HepG2 (cell line): ENCODE measurements at regions of chr12 and their contacts with region 1.

Region 1: DNA sequence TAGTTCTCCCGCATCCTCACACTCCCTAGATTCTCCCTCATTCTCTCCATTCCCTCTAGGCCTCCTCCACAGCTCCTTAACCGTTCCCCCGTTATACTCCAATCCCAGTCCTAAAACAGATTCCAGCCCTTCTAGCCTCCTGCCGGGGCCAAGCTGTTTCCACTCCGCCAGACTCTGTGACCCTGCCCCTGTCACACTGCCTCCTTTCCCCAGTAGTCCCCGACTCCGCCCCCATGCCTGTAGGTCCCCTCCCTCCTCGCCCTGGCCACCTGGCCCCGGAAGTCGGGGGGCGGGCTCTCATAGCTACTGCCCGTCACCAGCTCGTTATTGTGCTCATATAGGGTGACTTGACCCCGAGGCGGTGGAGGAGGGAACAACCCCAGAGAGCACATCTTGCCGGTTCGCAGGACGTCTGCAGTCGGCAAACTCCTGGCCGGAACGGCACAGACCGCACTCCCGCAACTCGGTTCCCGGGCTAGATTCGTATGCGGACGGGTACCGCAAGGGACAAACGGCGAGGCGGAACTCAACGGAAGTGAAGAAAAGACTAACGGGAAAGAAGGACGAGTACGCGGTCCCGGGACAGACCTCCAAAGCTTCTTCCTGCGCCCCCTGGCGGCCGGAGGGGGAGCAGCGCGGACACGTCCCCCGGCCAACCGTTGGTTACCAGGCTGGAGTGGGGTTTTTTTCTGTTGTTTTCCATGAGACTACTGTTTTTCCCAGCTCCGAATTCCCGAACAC is at the start of gene AAAS:
- DNase-seq: peak; percentile 93
- ATAC-seq: peak; percentile 89
- H3K4me3 ChIP-seq: peak within 1 kb of the TSS; percentile 64 to 82 (median 67)
- H3K27ac ChIP-seq: peak within 1 kb of the TSS; percentile 92
- H3K4me1 ChIP-seq: peaks cover 45% of the 10 kb centered on the region
- H3K27me3 ChIP-seq: no peaks in the 10 kb centered on the region
- CTCF ChIP-seq: peak; percentile 96
- EP300 ChIP-seq: peak in 1 of 2 experiments; percentile 41; a peak in 1 of 4 replicates
- POLR2A ChIP-seq: peak; percentile 84 to 95
- RAD21 ChIP-seq: peak; percentile 64; the same call in 1 of the 2 replicates
- total RNA-seq, gene AAAS: 47.6 and 49.9 TPM in 2 replicates

Region 2: GRCh38 chr12:53171725-53172329 is 149.4 kb before region 1 on chr12:
- CTCF ChIA-PET with region 1: no interaction called
- POLR2A ChIA-PET with region 1: no interaction called
- in situ Hi-C with region 1: no loop called
- intact Hi-C with region 1: no loop called
- DNase-seq: peak; percentile 34
- ATAC-seq: no peak
- H3K4me3 ChIP-seq: no peak overlapping the region
- H3K27ac ChIP-seq: no peak overlapping the region
- H3K4me1 ChIP-seq: peaks cover 43% of the 10 kb centered on the region
- H3K27me3 ChIP-seq: no peaks in the 10 kb centered on the region
- CTCF ChIP-seq: no peak
- EP300 ChIP-seq: no peak
- POLR2A ChIP-seq: no peak
- RAD21 ChIP-seq: no peak

Region 3: DNA sequence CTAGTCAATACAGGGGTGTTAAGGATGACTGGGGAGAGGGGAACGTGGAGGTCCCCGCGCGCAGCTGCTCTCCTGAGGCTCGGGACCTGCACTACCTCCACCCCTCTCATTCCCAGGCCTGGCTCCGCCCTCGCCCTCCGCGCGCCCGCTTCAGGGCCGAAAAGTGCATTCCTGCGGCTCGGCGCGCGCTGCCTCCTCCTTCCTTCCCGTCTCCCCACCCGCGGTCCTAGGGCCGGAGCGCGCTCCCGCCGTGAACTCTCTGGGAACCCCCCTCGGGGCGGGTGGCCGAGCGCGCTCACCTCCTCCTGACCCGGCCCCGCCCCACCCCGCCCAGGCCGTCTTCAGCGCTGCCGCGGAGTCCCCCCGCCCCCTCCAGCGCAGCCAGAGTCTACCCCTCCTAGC is 100.4 kb before region 1 on chr12:
- CTCF ChIA-PET with region 1: no interaction called
- POLR2A ChIA-PET with region 1: interaction called, 15 read pairs
- in situ Hi-C with region 1: no loop called
- intact Hi-C with region 1: no loop called
- DNase-seq: peak; percentile 81
- ATAC-seq: peak; percentile 80
- H3K4me3 ChIP-seq: peak overlapping the region; percentile 75 to 89 (median 89)
- H3K27ac ChIP-seq: peak overlapping the region; percentile 88
- H3K4me1 ChIP-seq: peaks cover 73% of the 10 kb centered on the region
- H3K27me3 ChIP-seq: peaks cover 0 to 21% of the 10 kb centered on the region in 2 experiments; a peak in 4 of 5 replicates
- CTCF ChIP-seq: no peak
- EP300 ChIP-seq: no peak
- POLR2A ChIP-seq: no peak
- RAD21 ChIP-seq: no peak

Region 4: GRCh38 chr12:53295070-53295890 is 26.0 kb before region 1 on chr12 and contains the start of gene PFDN5:
- CTCF ChIA-PET with region 1: no interaction called
- POLR2A ChIA-PET with region 1: interaction called, 58 read pairs
- in situ Hi-C with region 1: no loop called
- intact Hi-C with region 1: no loop called
- DNase-seq: peak; percentile 84
- ATAC-seq: peak; percentile 90
- H3K4me3 ChIP-seq: peak within 1 kb of the TSS; percentile 90 to 98 (median 96)
- H3K27ac ChIP-seq: peak within 1 kb of the TSS; percentile 74
- H3K4me1 ChIP-seq: peaks cover 40% of the 10 kb centered on the region
- H3K27me3 ChIP-seq: peaks cover 0 to 4% of the 10 kb centered on the region in 2 experiments; a peak in 1 of 5 replicates
- CTCF ChIP-seq: no peak; the same call in 1 of the 2 replicates
- EP300 ChIP-seq: 0 out of 4 replicates have a peak, but pooled peaks of 1 of the 2 experiments have one; percentile 7
- POLR2A ChIP-seq: peak; percentile 84 to 88
- RAD21 ChIP-seq: no peak
- total RNA-seq, gene PFDN5: 462 and 578 TPM in 2 replicates

Region 5: GRCh38 chr12:53344824-53345485 is 23.7 kb after region 1 on chr12:
- CTCF ChIA-PET with region 1: interaction called, 14 read pairs
- POLR2A ChIA-PET with region 1: interaction called, 23 read pairs
- in situ Hi-C with region 1: no loop called
- intact Hi-C with region 1: loop called (anchors 1 kb)
- DNase-seq: peak; percentile 54
- ATAC-seq: peak; percentile 87
- H3K4me3 ChIP-seq: peak overlapping the region; percentile 79 to 91 (median 82)
- H3K27ac ChIP-seq: no peak overlapping the region
- H3K4me1 ChIP-seq: peaks cover 17% of the 10 kb centered on the region
- H3K27me3 ChIP-seq: peaks cover 1 to 30% of the 10 kb centered on the region in 2 experiments; a peak in 4 of 5 replicates
- CTCF ChIP-seq: peak; percentile 90
- EP300 ChIP-seq: no peak
- POLR2A ChIP-seq: no peak
- RAD21 ChIP-seq: peak; percentile 73

Region 6: DNA sequence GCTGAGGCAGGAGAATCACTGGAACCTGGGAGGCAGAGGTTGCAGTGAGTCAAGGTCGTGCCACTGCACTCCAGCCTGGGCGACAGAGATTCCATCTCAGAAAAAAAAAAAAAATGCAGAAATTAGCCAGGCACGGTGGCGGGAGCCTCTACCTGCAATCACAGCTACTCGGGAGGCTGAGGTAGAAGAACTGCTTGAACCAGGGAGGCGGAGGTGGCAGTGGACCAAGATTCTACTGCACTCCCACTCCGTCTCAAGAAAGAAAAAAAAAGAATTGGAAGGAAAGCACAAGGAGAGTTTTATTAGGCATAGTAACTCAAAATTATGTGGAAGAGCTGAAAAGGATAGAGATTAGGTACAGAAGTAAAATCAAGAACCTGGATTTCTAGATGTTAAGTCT is 81.6 kb after region 1 on chr12:
- CTCF ChIA-PET with region 1: no interaction called
- POLR2A ChIA-PET with region 1: no interaction called
- in situ Hi-C with region 1: no loop called
- intact Hi-C with region 1: no loop called
- DNase-seq: no peak
- ATAC-seq: no peak
- H3K4me3 ChIP-seq: no peak overlapping the region
- H3K27ac ChIP-seq: no peak overlapping the region
- H3K4me1 ChIP-seq: peaks cover 5% of the 10 kb centered on the region
- H3K27me3 ChIP-seq: no peaks in the 10 kb centered on the region; a peak in 1 of 5 replicates
- CTCF ChIP-seq: no peak
- EP300 ChIP-seq: no peak
- POLR2A ChIP-seq: no peak
- RAD21 ChIP-seq: no peak

Region 7: GRCh38 chr12:53441040-53441833 is 120.0 kb after region 1 on chr12 and contains the start of gene PRR13:
- CTCF ChIA-PET with region 1: no interaction called
- POLR2A ChIA-PET with region 1: interaction called, 23 read pairs
- in situ Hi-C with region 1: no loop called
- intact Hi-C with region 1: no loop called
- DNase-seq: peak; percentile 98
- ATAC-seq: peak; percentile 97
- H3K4me3 ChIP-seq: peak within 1 kb of the TSS; percentile 71 to 78 (median 77)
- H3K27ac ChIP-seq: peak within 1 kb of the TSS; percentile 90
- H3K4me1 ChIP-seq: peaks cover 50% of the 10 kb centered on the region
- H3K27me3 ChIP-seq: no peaks in the 10 kb centered on the region; a peak in 1 of 5 replicates
- CTCF ChIP-seq: no peak
- EP300 ChIP-seq: 0 out of 4 replicates have a peak, but pooled peaks of 1 of the 2 experiments have one; percentile 10
- POLR2A ChIP-seq: peak; percentile 90 to 91
- RAD21 ChIP-seq: 0 out of 2 replicates have a peak, but pooled peaks have one; percentile 8
- total RNA-seq, gene PRR13: 102 and 109 TPM in 2 replicates

Region 8: DNA sequence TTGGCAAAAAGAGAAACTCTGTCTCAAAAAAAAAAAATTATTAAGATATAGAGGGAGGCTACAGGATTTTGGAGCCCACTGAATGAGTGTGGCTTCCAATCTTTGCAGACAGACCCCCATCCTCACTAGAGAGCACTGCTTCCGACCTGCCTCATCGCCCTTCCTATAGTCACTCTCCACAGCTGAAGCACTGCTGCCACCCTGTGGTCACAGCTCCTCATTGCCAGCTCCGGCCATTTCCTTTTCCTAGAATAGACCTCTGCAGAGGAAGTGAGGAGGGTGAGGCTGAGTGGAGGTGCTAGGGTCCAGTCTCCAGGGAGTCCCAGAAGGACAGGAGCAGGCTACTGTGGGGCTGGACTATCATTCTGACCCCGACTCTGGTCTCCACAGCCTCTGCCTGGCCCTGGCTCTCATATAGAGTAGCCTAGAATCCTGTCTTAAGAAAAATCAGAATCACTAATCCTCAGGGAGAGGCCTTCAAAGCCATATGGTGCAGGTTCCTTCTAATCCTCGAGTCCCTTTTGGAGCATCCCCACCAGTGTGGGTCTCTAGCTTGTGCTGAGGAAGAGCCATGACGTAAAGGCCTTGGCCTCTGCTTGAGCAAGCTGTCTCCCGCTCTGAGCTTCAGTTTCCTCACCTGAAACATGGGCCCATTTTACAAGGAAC is 187.4 kb after region 1 on chr12:
- CTCF ChIA-PET with region 1: interaction called, 3 read pairs
- POLR2A ChIA-PET with region 1: interaction called, 3 read pairs
- in situ Hi-C with region 1: loop called (anchors 5 kb)
- intact Hi-C with region 1: loop called (anchors 1 kb)
- DNase-seq: peak; percentile 72
- ATAC-seq: peak; percentile 93
- H3K4me3 ChIP-seq: no peak overlapping the region
- H3K27ac ChIP-seq: no peak overlapping the region
- H3K4me1 ChIP-seq: no peaks in the 10 kb centered on the region
- H3K27me3 ChIP-seq: no peaks in the 10 kb centered on the region
- CTCF ChIP-seq: peak; percentile 96
- EP300 ChIP-seq: no peak
- POLR2A ChIP-seq: no peak
- RAD21 ChIP-seq: peak; percentile 86

Region 9: GRCh38 chr12:53543539-53543938 is 222.3 kb after region 1 on chr12:
- CTCF ChIA-PET with region 1: no interaction called
- POLR2A ChIA-PET with region 1: no interaction called
- in situ Hi-C with region 1: no loop called
- intact Hi-C with region 1: no loop called
- DNase-seq: peak; percentile 68
- ATAC-seq: peak; percentile 90
- H3K4me3 ChIP-seq: no peak overlapping the region
- H3K27ac ChIP-seq: no peak overlapping the region
- H3K4me1 ChIP-seq: peaks cover 35% of the 10 kb centered on the region
- H3K27me3 ChIP-seq: no peaks in the 10 kb centered on the region
- CTCF ChIP-seq: peak; percentile 69
- EP300 ChIP-seq: no peak
- POLR2A ChIP-seq: no peak
- RAD21 ChIP-seq: peak; percentile 75